Transverse colon (tissue), 4 donors: ENCODE measurements at regions of chr11 and their contacts with region 1.

Region 1: DNA sequence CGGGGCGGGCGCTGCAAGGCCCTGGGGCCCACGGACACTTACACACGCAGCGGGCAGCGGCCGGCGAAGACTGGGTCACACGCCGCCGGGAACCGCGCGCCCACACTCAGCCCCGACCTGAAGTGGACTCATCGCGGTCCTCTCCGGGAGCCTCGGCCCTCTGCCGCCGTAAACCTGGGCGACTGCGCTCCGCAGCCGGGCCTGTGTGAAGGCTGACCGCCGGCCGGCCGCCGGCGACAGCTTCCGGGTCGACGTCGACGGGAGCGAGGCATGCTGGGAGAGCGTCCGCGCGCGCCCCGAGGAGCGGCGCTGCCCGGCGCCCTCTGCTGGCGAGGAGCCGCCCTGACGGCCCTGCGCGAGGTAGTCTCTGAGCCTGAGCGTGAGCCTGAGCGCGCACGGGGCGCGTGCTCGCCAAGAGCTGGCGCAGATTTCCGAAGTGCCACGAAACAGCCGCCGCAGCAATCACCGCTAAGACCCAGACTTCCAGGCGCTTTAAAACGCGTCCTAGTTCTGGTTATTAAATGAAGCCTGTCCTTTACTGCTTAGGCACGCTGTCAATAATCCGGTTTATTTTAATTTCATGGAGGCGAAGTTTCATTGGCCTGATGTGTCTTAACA is at the start of gene SNX19:
- DNase-seq: peak; percentile 95
- H3K4me3 ChIP-seq: peak within 1 kb of the TSS; percentile 62 to 85 (median 69)
- H3K27ac ChIP-seq: peak within 1 kb of the TSS; percentile 83 to 93 (median 90)
- H3K4me1 ChIP-seq: peaks cover 4 to 28% (median 13%) of the 10 kb centered on the region in 4 donors
- H3K27me3 ChIP-seq: no peaks in the 10 kb centered on the region
- CTCF ChIP-seq: peak; percentile 72 to 96 (median 92)
- EP300 ChIP-seq: no peak
- POLR2A ChIP-seq: peak; percentile 95
- total RNA-seq, gene SNX19: 89.8 to 193 (median 137) TPM

Region 2: GRCh38 chr11:129992161-129992944 is 924.0 kb before region 1 on chr11:
- in situ Hi-C with region 1: loop called in 1 of 4 experiments (anchors 25 kb)
- intact Hi-C with region 1: no loop called
- DNase-seq: peak; percentile 58
- H3K4me3 ChIP-seq: no peak overlapping the region
- H3K27ac ChIP-seq: peak overlapping the region in 1 of 4 donors; percentile 42
- H3K4me1 ChIP-seq: peaks cover 17 to 48% (median 31%) of the 10 kb centered on the region in 4 donors
- H3K27me3 ChIP-seq: no peaks in the 10 kb centered on the region
- CTCF ChIP-seq: peak in 3 of 5 experiments; percentile 27 to 42 (median 29)
- EP300 ChIP-seq: no peak
- POLR2A ChIP-seq: no peak